ENCODE measurements at regions of chr17 and their contacts with region 1.

Region 1: GRCh38 chr17:32519228-32520103 is 32.7 kb downstream of the CDK5R1 start:
- DNase-seq: peak; percentile 55
- H3K4me3 Mint-ChIP-seq: peak overlapping the region; percentile 74
- H3K27ac Mint-ChIP-seq: peak overlapping the region; percentile 93
- H3K4me1 Mint-ChIP-seq: peaks cover 67% of the 10 kb centered on the region
- H3K27me3 Mint-ChIP-seq: no peaks in the 10 kb centered on the region

Region 2: GRCh38 chr17:31869797-31870568 is 649.5 kb before region 1 on chr17:
- intact Hi-C with region 1: no loop called
- DNase-seq: no peak
- H3K4me3 Mint-ChIP-seq: no peak overlapping the region
- H3K27ac Mint-ChIP-seq: no peak overlapping the region
- H3K4me1 Mint-ChIP-seq: no peaks in the 10 kb centered on the region
- H3K27me3 Mint-ChIP-seq: no peaks in the 10 kb centered on the region

Region 3: DNA sequence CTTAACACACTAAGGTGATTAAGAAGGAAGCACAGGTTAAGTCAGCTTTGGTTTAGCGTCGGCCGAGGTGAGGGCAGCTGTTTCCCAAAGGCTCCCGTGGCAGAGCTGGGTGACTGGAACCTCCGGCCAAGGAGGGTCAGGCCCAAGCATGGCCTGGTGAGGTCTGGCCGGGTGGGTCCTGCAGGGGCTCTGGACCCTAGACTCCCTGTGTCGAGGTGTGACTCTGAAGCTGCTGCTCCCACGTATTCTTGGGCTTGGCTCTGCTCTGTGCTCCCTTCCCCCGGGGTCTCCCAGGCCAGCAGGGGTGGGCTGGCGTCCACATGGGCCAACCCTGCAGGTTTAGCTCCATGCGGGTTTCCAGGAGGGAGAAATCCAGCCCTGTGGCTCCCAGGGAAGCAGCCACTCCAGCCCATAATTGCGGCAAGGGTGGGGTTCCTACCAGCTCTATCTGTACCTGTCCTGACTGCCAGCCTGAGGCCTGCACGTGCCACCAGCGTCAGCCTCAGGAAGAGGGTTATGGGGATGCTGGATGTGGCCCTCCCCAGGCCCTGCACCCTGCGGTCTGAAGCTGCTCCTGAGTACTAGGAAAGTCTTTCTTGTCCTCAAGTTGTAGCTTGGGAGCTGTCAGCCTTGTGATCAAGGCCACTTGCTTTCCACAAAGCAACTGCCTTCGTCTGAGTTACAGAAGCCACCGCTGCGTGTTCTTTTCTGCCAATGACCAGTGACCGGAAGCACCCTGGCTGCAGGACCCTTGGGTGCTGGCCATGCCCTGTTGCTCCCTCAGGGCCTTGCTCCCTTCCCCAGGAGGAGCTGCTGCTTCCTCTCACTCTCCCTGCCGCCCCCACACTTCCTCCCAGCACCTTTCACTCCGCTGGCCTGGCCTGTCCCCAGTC is 27.8 kb before region 1 on chr17:
- intact Hi-C with region 1: loop called (anchors 2 kb)
- DNase-seq: no peak
- H3K4me3 Mint-ChIP-seq: peak overlapping the region; percentile 50
- H3K27ac Mint-ChIP-seq: peak overlapping the region; percentile 60
- H3K4me1 Mint-ChIP-seq: peaks cover 48% of the 10 kb centered on the region
- H3K27me3 Mint-ChIP-seq: no peaks in the 10 kb centered on the region

Region 4: DNA sequence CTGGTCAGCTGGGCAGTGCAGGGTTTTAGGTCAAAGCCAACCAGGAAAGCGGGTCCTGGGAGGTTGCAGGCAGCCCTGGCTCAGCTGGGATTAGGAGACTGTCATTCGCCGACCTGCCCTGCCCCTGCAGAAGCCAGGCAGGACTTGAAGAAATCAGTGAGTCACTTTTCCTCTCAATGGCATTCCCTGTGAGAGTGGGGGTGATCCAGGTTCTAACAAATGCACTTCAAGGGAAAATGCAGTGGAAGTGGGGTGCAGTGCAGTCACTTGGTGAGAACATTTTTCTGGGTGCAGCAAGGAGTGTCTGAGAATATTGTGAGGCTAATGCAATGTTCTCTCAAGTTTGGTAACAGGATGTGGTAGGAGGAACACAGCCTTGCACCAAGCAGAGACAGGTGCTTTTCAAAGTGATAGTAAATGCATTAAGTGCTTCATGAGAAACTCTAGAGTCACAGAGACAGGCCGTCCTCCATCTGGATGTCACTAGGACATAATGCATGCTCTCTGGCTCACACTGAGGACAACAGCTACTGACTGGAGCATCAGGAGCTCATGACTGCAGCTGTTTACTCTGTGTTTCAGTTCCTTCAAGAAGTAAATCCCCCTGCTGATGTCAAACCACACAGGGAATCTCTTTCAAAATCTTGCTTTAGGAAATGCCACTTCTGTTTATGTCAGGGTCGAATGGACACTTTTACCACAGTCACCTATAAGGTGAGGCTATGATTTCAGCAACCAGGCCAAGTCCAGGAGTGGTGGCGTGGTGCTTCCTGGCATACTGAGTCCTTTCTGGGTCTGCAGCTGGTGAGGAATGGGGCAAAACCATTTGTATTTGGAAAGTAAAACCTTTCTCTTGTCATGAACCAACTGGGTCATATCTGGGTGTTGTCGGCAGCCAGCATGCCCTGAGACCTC is 16.0 kb before region 1 on chr17:
- intact Hi-C with region 1: loop called (anchors 1 kb)
- DNase-seq: peak; percentile 55
- H3K4me3 Mint-ChIP-seq: peak overlapping the region; percentile 43
- H3K27ac Mint-ChIP-seq: peak overlapping the region; percentile 95
- H3K4me1 Mint-ChIP-seq: peaks cover 50% of the 10 kb centered on the region
- H3K27me3 Mint-ChIP-seq: no peaks in the 10 kb centered on the region

Region 5: GRCh38 chr17:32551186-32551955 is 31.9 kb after region 1 on chr17:
- intact Hi-C with region 1: loop called (anchors 1 kb)
- DNase-seq: no peak
- H3K4me3 Mint-ChIP-seq: no peak overlapping the region
- H3K27ac Mint-ChIP-seq: peak overlapping the region; percentile 55
- H3K4me1 Mint-ChIP-seq: peaks cover 47% of the 10 kb centered on the region
- H3K27me3 Mint-ChIP-seq: no peaks in the 10 kb centered on the region

Region 6: GRCh38 chr17:32558997-32559650 is 39.7 kb after region 1 on chr17:
- intact Hi-C with region 1: loop called (anchors 2 kb)
- DNase-seq: no peak
- H3K4me3 Mint-ChIP-seq: no peak overlapping the region
- H3K27ac Mint-ChIP-seq: peak overlapping the region; percentile 18
- H3K4me1 Mint-ChIP-seq: peaks cover 33% of the 10 kb centered on the region
- H3K27me3 Mint-ChIP-seq: no peaks in the 10 kb centered on the region

Region 7: GRCh38 chr17:32575880-32576279 is 56.4 kb after region 1 on chr17:
- intact Hi-C with region 1: no loop called
- DNase-seq: no peak
- H3K4me3 Mint-ChIP-seq: no peak overlapping the region
- H3K27ac Mint-ChIP-seq: no peak overlapping the region
- H3K4me1 Mint-ChIP-seq: peaks cover 9% of the 10 kb centered on the region
- H3K27me3 Mint-ChIP-seq: peaks cover 5% of the 10 kb centered on the region

Region 8: DNA sequence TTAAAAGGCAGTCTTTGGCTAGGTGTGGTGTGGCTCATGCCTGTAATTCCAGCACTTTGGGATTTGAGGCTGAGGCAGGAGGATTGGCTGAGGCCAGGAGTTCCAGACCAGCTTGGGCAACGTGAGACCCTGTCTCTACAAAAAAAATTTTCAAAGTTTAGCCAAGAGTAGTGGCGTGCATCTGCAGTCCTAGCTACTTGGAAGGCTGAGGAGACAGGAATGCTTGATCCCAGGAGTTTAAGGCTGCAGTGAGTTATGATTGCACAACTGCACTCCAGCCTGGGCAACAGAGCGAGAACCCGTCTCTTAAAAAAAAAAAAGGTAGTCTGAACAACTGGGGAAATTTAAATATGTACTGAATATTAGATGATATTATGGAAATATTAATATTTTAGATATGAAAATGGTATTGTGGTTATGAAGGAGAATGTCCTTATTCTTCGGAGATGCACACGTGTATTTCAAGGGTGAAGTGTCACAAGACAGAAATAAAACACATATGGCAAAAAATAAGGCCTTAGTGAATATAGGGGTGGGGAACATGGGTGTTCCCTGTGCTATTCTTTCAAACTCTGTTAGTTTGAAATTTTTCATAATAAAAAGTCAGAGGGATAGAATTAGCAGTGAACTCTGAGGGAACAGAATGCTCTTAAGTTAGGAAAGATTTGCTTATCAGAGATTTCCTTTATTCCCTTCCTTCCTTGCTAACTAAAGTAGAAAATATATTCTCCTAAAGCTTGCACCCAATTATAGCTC is 112.1 kb after region 1 on chr17:
- intact Hi-C with region 1: no loop called
- DNase-seq: no peak
- H3K4me3 Mint-ChIP-seq: no peak overlapping the region
- H3K27ac Mint-ChIP-seq: no peak overlapping the region
- H3K4me1 Mint-ChIP-seq: no peaks in the 10 kb centered on the region
- H3K27me3 Mint-ChIP-seq: no peaks in the 10 kb centered on the region

Region 9: GRCh38 chr17:32794533-32795246 is 275.2 kb after region 1 on chr17:
- intact Hi-C with region 1: no loop called
- DNase-seq: no peak
- H3K4me3 Mint-ChIP-seq: no peak overlapping the region
- H3K27ac Mint-ChIP-seq: no peak overlapping the region
- H3K4me1 Mint-ChIP-seq: peaks cover 2% of the 10 kb centered on the region
- H3K27me3 Mint-ChIP-seq: peaks cover 18% of the 10 kb centered on the region

Region 10: DNA sequence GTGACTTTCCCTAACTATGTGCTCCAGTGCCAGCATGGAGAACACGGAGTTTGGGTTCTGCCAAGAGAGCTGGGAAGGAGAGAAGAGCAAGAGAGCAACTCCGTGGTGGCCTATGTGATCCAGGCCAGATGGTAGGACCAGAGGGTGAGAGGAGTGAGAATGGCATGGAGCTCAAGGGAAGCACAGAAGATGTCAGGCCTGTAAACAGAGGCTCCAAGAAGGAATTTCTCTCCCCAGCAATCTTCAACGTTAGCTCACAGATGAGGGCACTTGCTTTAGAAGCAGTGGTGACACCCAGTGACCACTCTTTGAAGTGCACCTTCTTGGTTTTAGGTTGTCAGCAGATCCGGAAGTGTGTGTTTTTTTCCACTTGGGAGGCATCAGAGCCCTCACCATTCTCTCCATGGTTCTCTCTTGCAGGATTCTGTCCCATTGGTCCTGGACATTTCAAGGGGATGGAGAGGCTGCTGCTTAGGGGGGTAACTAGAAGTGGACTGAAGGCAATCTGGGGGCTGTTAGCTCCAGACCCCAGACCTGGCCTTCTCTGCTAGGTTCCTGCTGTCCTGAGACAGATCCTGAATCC is 390.4 kb after region 1 on chr17:
- intact Hi-C with region 1: loop called (anchors 10 kb)
- DNase-seq: peak; percentile 57
- H3K4me3 Mint-ChIP-seq: no peak overlapping the region
- H3K27ac Mint-ChIP-seq: peak overlapping the region; percentile 24
- H3K4me1 Mint-ChIP-seq: peaks cover 48% of the 10 kb centered on the region
- H3K27me3 Mint-ChIP-seq: no peaks in the 10 kb centered on the region

Region 11: DNA sequence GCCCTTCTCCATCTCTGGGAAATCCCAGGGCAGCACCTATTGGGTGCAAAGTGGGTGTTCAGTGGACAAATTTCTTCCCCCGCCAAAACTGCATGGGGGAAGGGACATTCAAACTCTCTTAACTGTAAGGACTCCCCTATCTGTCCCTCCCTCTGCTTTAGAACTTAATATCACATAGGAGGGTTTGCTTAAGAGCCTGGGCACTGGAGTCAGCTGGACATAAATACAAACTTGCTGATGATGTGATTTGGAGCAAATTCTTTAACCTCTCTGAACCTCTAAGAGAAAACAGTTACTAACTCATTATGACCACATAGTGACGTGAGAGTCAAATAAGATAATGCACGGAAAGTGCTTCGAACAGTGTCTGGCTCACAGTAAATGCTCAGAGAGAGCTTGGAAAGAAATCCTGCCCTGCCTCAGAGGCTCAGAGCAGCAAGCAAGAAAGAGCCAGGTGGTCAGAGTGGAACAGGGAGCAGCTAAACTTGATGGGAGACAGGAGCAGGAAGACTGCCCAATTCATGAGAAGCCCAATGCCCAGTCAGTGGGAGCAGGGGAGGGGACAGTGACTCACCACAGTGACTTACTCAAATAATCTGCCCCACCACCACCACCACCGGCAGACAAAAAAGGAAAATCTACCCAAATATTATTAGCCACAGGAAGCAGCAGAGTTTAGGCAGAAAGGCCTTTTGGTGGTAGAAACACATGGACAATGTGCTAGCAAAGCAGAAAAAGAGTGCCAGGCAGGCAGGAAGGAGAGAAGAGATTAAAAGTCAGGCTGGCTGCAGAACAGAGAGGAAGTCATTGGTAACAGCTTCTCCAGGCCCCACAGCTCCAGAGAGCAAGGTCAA is 1867.5 kb after region 1 on chr17:
- intact Hi-C with region 1: loop called (anchors 10 kb)
- DNase-seq: no peak
- H3K4me3 Mint-ChIP-seq: peak overlapping the region; percentile 23
- H3K27ac Mint-ChIP-seq: peak overlapping the region; percentile 94
- H3K4me1 Mint-ChIP-seq: peaks cover 82% of the 10 kb centered on the region
- H3K27me3 Mint-ChIP-seq: no peaks in the 10 kb centered on the region

Measured in activated T-helper 2 cell treated with anti-CD3 and anti-CD28 coated beads, Interferon-gamma antibody, Interleukin-2, Interleukin-4, amounts not matched to agents 10 μg/mL and 5 μg/mL and 100 μg/mL, durations not matched to agents 14 hours and 24 hours and 36 hours (primary cell).